Psoas muscle (tissue), 8 donors: ENCODE measurements at regions of chr16 and their contacts with region 1.

Region 1: DNA sequence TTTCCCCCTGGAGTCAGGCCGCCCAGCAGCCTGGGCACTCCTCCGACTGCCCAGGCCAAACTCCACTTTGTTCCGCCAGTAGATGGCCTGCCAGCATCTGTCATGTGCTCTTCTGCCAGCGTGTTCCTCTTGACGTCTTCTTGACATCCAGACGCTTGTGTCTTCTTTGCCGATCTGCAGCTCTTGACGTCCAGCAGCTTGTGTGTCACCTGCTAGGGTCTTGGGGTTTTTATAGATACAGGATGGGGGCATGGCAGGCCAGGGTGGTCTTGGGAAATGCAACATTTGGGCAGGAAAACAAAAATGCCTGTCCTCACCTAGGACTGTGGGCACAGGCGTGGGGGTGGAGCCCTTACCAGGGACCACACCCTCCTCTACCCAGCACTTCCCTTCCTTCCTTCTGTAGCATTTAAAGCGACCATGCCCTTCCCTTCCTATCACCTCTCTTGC is 88.7 kb downstream of the BMERB1 start:
- DNase-seq: peak; percentile 51 to 82
- ATAC-seq: peak; percentile 65 to 79 (median 72)
- H3K4me3 ChIP-seq: peak overlapping the region; percentile 20
- H3K27ac ChIP-seq: peak overlapping the region; percentile 74
- H3K4me1 ChIP-seq: peaks cover 37% of the 10 kb centered on the region
- H3K27me3 ChIP-seq: no peaks in the 10 kb centered on the region
- CTCF ChIP-seq: peak; percentile 29

Region 2: DNA sequence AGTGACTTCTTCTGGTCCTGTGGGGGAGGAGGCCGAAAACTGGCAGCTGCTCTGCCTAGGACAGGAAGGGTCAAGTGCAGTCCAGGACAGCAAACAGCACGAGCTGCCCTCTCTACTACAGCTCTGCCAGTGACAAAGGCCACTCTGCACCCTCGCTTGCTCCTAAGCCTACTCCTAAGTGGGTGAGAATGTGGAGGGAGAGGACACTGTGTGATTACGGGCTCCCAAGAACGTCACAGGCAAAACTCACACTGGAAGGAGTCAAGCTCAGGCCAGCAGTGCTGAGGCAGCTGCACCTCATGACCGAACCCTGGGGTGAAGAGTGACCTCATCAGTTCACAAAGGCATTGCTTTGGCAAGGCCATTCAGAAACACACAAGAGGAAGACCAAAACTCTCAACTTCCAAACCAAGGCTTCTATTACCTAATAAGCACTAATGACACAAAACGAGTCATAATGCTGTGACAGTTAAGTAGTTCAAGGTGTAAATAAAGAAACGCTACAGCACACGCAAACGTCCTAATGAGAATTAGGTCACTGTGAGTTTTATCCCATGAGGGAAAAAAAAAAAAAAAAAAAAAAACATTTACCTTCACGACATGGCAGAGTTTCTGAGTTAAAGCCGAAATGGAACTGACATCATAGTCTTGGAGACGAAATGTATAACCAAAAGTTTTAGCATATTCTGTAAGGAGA is 84.7 kb after region 1 on chr16:
- intact Hi-C with region 1: loop called in 1 of 2 experiments (anchors 5 kb)
- DNase-seq: peak; percentile 78 to 92
- ATAC-seq: peak; percentile 79 to 92 (median 90)
- H3K4me3 ChIP-seq: no peak overlapping the region
- H3K27ac ChIP-seq: peak overlapping the region; percentile 78
- H3K4me1 ChIP-seq: peaks cover 49% of the 10 kb centered on the region
- H3K27me3 ChIP-seq: no peaks in the 10 kb centered on the region
- CTCF ChIP-seq: no peak

Region 3: DNA sequence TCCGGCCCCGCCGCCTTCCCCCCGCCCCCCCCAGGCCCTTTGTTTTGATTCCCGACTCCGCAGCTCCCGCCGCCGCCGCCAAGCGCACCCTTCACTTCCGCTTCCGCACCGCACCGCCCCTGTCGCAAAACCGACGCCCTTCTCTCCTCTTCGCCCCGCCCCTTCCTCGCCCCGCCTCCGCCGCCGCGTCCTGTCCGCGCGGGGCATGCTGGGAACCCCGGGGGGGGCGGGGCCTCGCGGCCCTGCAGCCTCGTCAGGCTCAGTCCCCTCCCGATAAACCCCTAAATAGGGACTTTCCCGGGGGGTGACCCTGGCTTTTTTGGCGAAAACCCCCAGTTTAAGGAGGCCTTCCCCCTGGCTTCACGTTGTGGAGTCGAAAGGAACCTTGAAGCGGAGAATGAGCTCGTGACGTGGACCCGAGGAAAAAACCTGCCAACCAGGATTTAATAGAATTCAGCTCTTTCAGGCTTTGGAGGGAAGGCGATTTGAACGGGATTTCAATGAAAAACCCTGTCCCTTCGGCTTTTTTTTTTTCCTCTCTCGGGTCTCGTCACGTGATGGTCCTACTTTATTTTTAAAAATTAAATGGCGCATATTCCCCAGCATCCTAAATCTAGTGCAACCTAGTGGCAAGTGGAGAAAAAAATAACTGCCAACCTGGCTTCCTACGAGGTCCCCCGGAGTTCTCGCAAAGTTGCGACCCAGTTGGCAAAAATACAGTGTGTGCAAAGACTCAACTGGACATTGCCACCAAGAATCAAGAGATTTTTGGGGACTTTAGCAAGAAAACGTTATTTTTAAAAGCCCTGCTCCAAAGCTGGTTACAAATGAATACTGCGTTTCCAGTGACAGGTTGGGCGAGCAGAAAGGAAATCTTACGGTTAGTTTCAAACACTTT is 120.2 kb after region 1 on chr16 and contains the start of gene MARF1:
- intact Hi-C with region 1: loop called in 1 of 2 experiments (anchors 2 kb)
- DNase-seq: peak; percentile 99 to 100
- ATAC-seq: peak; percentile 96 to 99 (median 96)
- H3K4me3 ChIP-seq: peak within 1 kb of the TSS; percentile 87
- H3K27ac ChIP-seq: peak within 1 kb of the TSS; percentile 99
- H3K4me1 ChIP-seq: peaks cover 26% of the 10 kb centered on the region
- H3K27me3 ChIP-seq: no peaks in the 10 kb centered on the region
- CTCF ChIP-seq: peak; percentile 54
- total RNA-seq, gene MARF1: 41.7 to 91.5 (median 51.3) TPM